CD4-positive, alpha-beta T cell (primary cell): ENCODE measurements at regions of chr3 and their contacts with region 1.

Region 1: DNA sequence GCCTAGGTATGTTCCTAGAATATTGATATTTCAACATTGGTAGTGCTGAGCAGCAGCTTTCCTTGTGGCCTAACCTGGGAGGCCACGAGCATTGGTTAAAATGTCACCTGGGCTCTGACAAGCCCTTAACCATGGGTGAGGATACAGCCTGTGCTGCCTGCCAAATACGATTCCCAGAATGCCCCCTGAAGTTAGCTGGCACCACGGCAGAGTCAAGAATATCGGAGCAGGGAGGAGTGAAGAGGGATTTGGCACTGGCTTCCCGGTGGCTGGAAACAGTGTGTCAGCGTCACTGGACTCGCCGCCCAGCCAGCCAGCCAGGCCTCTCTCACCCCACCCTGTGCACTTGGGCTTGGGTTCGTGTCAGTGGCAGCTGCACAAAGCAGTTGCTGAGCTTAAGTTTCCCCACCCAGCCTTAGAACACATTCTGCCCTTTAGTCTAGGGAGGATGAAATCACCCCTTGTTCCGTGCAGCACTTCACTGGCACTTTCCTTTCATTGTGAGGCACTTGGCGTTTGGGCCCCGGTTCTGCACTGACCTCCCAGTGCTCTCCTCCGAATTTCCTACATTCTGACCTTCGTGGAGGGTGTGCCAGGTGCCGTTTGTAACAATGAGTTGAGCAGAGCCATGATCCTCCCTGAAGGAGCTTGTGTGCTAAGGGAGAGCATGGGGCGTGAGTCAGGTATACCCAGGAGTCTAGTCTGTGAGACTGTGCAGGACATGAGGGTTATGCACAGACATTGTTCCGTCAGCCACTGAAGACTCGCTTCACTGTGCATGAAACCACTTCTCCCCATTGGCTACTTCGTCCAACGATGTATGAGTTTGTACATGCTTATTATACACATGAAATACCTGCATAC is 152.8 kb upstream of the BHLHE40 start:
- DNase-seq: no peak
- ATAC-seq: no peak
- H3K4me3 ChIP-seq: peak overlapping the region; percentile 30
- H3K4me3 Mint-ChIP-seq: peak overlapping the region; percentile 82
- H3K27ac ChIP-seq: no peak overlapping the region
- H3K27ac Mint-ChIP-seq: peak overlapping the region; percentile 92
- H3K4me1 ChIP-seq: peaks cover 87% of the 10 kb centered on the region
- H3K4me1 Mint-ChIP-seq: peaks cover 95% of the 10 kb centered on the region
- H3K27me3 ChIP-seq: no peaks in the 10 kb centered on the region
- H3K27me3 Mint-ChIP-seq: no peaks in the 10 kb centered on the region
- CTCF ChIP-seq: no peak

Region 2: GRCh38 chr3:4712143-4712542 is 114.3 kb before region 1 on chr3:
- CTCF ChIA-PET with region 1: interaction called, 5 read pairs
- POLR2A ChIA-PET with region 1: interaction called, 3 read pairs
- intact Hi-C with region 1: loop called (anchors 5 to 10 kb)
- DNase-seq: peak in 2 of 14 experiments; percentile 34 to 42
- ATAC-seq: no peak
- H3K4me3 ChIP-seq: no peak overlapping the region
- H3K4me3 Mint-ChIP-seq: no peak overlapping the region
- H3K27ac ChIP-seq: no peak overlapping the region
- H3K27ac Mint-ChIP-seq: no peak overlapping the region
- H3K4me1 ChIP-seq: no peaks in the 10 kb centered on the region
- H3K4me1 Mint-ChIP-seq: no peaks in the 10 kb centered on the region
- H3K27me3 ChIP-seq: no peaks in the 10 kb centered on the region
- H3K27me3 Mint-ChIP-seq: no peaks in the 10 kb centered on the region
- CTCF ChIP-seq: no peak

Region 3: DNA sequence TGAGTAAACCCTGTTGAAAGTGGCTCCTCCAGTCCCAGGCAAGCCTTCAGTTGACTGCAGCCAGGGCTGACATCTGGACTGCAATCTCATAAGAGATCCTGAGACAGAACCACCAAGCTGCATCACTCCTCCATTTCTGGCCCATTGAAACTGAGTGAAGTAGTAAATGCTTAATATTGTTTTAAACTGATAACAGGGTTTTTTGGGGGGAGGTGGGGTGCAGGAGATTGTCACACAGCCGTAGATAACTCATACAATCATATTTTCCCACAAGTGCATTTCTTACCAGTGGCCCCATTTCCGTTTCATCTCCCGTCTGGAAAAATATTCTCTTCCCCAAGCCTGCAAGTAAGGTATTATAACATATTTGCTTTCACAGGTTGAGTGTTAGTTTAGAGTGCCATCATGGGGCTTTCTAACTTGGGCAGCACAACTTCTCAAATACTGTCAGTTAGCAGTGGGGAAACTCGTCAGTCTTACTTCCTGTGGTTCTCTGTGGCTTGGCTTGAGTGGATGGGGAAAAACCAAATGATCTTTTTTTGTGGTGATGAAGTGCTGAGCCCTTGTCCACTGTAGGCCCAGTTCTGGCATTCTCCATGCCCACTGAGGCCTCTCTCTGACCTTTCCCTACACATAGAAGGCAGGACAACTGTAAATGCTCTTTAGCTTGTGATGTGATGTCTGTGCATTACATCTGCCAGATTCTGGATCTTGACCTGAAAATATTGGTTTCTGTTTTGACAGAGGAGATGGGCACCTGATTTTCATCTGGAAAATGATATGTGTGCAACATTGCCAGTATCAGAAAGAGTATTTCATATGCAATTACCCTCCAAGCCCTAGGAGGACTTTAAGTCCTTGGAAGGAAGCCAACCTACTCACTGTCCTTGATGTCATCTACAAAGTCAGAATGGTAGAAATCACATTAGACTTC is 62.7 kb after region 1 on chr3:
- CTCF ChIA-PET with region 1: no interaction called
- POLR2A ChIA-PET with region 1: interaction called, 3 read pairs
- intact Hi-C with region 1: loop called in 1 of 2 experiments (anchors 1 kb)
- DNase-seq: peak in 5 of 14 experiments; percentile 13 to 73 (median 68)
- ATAC-seq: peak; percentile 66
- H3K4me3 ChIP-seq: no peak overlapping the region
- H3K4me3 Mint-ChIP-seq: no peak overlapping the region
- H3K27ac ChIP-seq: no peak overlapping the region
- H3K27ac Mint-ChIP-seq: peak overlapping the region; percentile 39
- H3K4me1 ChIP-seq: peaks cover 19% of the 10 kb centered on the region
- H3K4me1 Mint-ChIP-seq: peaks cover 16% of the 10 kb centered on the region
- H3K27me3 ChIP-seq: no peaks in the 10 kb centered on the region
- H3K27me3 Mint-ChIP-seq: no peaks in the 10 kb centered on the region
- CTCF ChIP-seq: no peak

Region 4: GRCh38 chr3:4986782-4987537 is 160.5 kb after region 1 on chr3:
- CTCF ChIA-PET with region 1: interaction called, 29 read pairs
- POLR2A ChIA-PET with region 1: interaction called, 7 read pairs
- intact Hi-C with region 1: loop called in 1 of 2 experiments (anchors 2 kb)
- DNase-seq: peak; percentile 45 to 88 (median 58)
- ATAC-seq: peak; percentile 37
- H3K4me3 ChIP-seq: peak overlapping the region; percentile 67
- H3K4me3 Mint-ChIP-seq: peak overlapping the region; percentile 86
- H3K27ac ChIP-seq: peak overlapping the region; percentile 29 to 59
- H3K27ac Mint-ChIP-seq: peak overlapping the region; percentile 89
- H3K4me1 ChIP-seq: peaks cover 55% of the 10 kb centered on the region
- H3K4me1 Mint-ChIP-seq: peaks cover 45% of the 10 kb centered on the region
- H3K27me3 ChIP-seq: no peaks in the 10 kb centered on the region
- H3K27me3 Mint-ChIP-seq: no peaks in the 10 kb centered on the region
- CTCF ChIP-seq: no peak

Region 5: GRCh38 chr3:5057857-5058324 is 231.4 kb after region 1 on chr3:
- CTCF ChIA-PET with region 1: interaction called, 5 read pairs
- POLR2A ChIA-PET with region 1: no interaction called
- intact Hi-C with region 1: loop called (anchors 1 to 5 kb)
- DNase-seq: peak; percentile 53 to 87 (median 63)
- ATAC-seq: peak; percentile 96
- H3K4me3 ChIP-seq: no peak overlapping the region
- H3K4me3 Mint-ChIP-seq: no peak overlapping the region
- H3K27ac ChIP-seq: no peak overlapping the region
- H3K27ac Mint-ChIP-seq: no peak overlapping the region
- H3K4me1 ChIP-seq: peaks cover 2% of the 10 kb centered on the region
- H3K4me1 Mint-ChIP-seq: no peaks in the 10 kb centered on the region
- H3K27me3 ChIP-seq: no peaks in the 10 kb centered on the region
- H3K27me3 Mint-ChIP-seq: peaks cover 3% of the 10 kb centered on the region
- CTCF ChIP-seq: peak; percentile 79